Left cardiac atrium (tissue), 4 donors: ENCODE measurements at regions of chr17 and their contacts with region 1.

Region 1: DNA sequence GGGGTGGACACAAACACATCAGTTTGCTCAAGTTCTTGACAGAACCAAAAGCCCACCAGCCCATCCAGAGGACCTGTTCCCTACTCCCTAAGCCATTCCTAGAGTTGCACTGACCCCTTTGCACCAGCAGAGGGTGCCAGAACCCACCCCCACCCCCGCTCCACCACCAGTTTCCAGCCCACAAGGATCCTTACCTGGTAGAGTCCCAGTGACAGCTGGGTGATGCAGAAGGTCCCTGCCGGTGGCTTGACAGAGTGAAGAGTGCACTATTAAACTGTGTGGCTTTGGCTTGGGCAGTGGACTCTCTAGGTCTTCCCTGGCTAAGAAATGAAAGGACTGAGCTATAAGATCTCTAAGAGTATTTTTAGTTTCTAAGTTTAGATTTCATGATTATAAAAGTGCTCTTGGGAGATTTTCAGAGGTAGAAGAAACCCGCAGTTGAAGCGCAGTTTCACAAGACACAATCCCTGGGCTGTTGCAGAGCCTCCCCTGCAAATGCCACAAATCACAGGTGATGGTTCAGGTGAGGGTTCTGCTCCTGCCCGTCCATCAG is 73.3 kb upstream of the MTMR4 start:
- DNase-seq: peak; percentile 41
- ATAC-seq: peak; percentile 72 to 77

Region 2: DNA sequence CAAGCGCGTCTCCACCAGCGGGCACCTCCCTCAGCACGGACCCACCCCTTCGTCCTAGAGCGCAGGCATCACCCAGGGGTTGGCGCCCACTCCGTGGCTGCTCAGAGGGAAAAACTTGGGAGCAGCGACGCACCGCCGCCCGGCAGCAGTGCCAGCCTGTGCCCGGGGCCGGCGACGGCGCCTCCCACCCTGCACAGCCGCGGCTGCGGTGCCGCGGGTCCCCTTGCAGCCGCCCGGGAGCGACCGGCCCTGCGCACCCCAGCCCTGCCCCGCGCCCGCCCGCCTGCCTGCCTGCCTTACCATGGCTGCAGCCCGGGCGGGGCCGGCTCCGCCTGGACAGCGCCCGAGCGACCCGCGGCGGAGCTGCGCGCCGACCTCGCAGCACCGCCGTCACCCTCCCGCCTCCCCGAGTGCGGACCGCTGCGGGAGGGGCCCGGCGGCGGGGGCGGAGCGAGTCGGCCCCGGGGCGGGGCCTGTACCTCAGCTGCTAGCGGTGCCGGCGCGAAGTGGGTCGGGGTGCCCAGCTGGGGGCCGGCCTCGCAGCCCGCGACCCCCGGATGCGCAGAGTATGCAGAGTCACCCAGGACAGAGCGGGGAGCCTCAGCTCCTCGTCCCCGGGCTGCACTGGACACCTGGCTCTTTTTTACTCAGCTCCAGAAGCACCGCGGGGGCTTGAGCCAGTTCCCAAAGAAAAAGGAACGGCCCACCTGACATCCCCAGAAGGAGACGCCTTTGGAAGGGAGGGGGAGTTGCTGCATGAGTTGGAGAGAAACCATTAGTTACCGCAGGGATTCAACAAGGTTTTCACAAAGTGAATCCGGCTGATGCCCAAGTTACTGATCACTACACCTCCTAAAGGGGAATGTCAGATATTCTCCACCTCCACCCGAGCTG is 55.9 kb before region 1 on chr17:
- intact Hi-C with region 1: loop called in 1 of 2 experiments (anchors 5 kb)
- DNase-seq: peak; percentile 67
- ATAC-seq: peak; percentile 90

Region 3: GRCh38 chr17:58692239-58693055 is 104.7 kb after region 1 on chr17 and contains the start of gene RAD51C:
- intact Hi-C with region 1: loop called in 1 of 2 experiments (anchors 10 kb)
- DNase-seq: peak; percentile 90
- ATAC-seq: peak; percentile 99 to 100
- total RNA-seq, gene RAD51C: 32.4 to 36.8 TPM

Region 4: GRCh38 chr17:59004338-59005111 is 416.7 kb after region 1 on chr17:
- intact Hi-C with region 1: loop called (anchors 5 to 10 kb)
- DNase-seq: peak; percentile 53
- ATAC-seq: peak; percentile 68 to 70